ENCODE measurements at regions of chr6 and their contacts with region 1.

Region 1: GRCh38 chr6:8102122-8102958 is at the start of gene EEF1E1:
- DNase-seq: peak; percentile 94 to 96
- H3K4me3 ChIP-seq: peak within 1 kb of the TSS; percentile 68 to 94 (median 73)
- H3K27ac ChIP-seq: peak within 1 kb of the TSS; percentile 72 to 78
- H3K4me1 ChIP-seq: no peaks in the 10 kb centered on the region
- H3K27me3 ChIP-seq: no peaks in the 10 kb centered on the region
- CTCF ChIP-seq: no peak
- POLR2A ChIP-seq: no peak
- total RNA-seq, gene EEF1E1: 18.9 to 48.5 (median 39.1) TPM

Region 2: DNA sequence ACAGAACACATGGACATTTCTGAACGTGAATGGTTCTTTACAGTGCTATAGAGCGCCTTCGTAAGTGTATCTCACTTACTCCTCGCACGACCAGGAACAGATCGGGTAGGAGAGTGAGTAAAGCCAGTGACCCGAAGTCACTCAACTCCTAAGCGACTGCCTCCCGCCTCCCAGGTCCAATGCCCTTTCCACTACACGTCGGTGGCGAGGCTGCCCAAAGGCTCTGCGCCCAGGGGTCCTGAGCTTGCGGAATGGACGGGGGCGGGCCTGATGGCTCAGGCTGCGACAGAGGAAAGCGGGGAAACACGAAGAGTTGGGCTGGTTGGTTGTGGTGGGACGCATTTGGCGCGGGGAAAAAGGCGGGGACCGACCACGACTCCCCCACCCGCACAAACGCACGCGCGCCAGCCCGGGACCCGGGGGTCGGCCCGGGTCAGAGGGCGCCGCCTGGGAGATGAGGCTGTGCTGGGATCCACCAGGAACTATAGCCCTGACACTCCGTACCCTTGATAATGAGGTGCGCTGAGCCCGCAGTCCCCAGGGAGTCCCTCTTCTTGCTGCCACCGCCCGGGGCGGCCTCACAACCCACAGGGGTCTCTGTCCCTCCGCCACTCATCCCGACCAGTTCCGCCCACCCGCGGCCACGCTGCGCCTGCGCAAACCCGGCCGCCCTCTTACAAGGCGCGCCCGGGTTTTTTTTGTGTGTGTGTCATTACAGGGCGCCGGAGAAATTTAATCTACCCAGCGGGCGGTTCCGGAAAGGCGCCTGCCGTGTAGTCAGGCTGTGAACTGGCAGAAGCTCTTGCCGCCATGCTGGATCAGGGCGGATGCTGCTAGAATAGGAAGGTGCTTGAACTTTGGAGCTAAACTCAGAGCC is 38.3 kb before region 1 on chr6 and contains the start of gene BLOC1S5:
- intact Hi-C with region 1: loop called (anchors 5 kb)
- DNase-seq: peak; percentile 93 to 96
- H3K4me3 ChIP-seq: peak within 1 kb of the TSS; percentile 88 to 92 (median 89)
- H3K27ac ChIP-seq: peak within 1 kb of the TSS; percentile 88 to 95
- H3K4me1 ChIP-seq: no peaks in the 10 kb centered on the region
- H3K27me3 ChIP-seq: no peaks in the 10 kb centered on the region
- CTCF ChIP-seq: peak in 1 of 3 donors; percentile 14
- POLR2A ChIP-seq: peak; percentile 52
- total RNA-seq, gene BLOC1S5: 12.5 to 26.2 (median 16.6) TPM

Region 3: GRCh38 chr6:8088886-8089285 is 13.5 kb before region 1 on chr6:
- intact Hi-C with region 1: no loop called
- DNase-seq: no peak
- H3K4me3 ChIP-seq: no peak overlapping the region
- H3K27ac ChIP-seq: no peak overlapping the region
- H3K4me1 ChIP-seq: no peaks in the 10 kb centered on the region
- H3K27me3 ChIP-seq: no peaks in the 10 kb centered on the region
- CTCF ChIP-seq: no peak
- POLR2A ChIP-seq: no peak

Measured in breast epithelium (tissue), 4 donors.